Activated T-helper 1 cell treated with anti-CD3 and anti-CD28 coated beads, Interleukin-12 subunit alpha, Interleukin-12 subunit beta, Interleukin-2, Interleukin-4 antibody, amounts not matched to agents 30 ng/mL and 10 ng/mL and 1 ng/mL, durations not matched to agents 14 hours and 24 hours and 36 hours (primary cell): ENCODE measurements at regions of chr17 and their contacts with region 1.

Region 1: GRCh38 chr17:75319904-75320691 is 30.9 kb upstream of the SLC25A19 start:
- DNase-seq: no peak
- H3K4me3 Mint-ChIP-seq: no peak overlapping the region
- H3K27ac Mint-ChIP-seq: no peak overlapping the region
- H3K4me1 Mint-ChIP-seq: peaks cover 16% of the 10 kb centered on the region
- H3K27me3 Mint-ChIP-seq: no peaks in the 10 kb centered on the region

Region 2: GRCh38 chr17:75295201-75296158 is 24.6 kb before region 1 on chr17:
- intact Hi-C with region 1: loop called (anchors 1 kb)
- DNase-seq: peak; percentile 49
- H3K4me3 Mint-ChIP-seq: peak overlapping the region; percentile 49
- H3K27ac Mint-ChIP-seq: peak overlapping the region; percentile 96
- H3K4me1 Mint-ChIP-seq: peaks cover 24% of the 10 kb centered on the region
- H3K27me3 Mint-ChIP-seq: no peaks in the 10 kb centered on the region

Region 3: GRCh38 chr17:75338335-75338734 is 18.2 kb after region 1 on chr17:
- intact Hi-C with region 1: loop called (anchors 2 kb)
- DNase-seq: no peak
- H3K4me3 Mint-ChIP-seq: peak overlapping the region; percentile 63
- H3K27ac Mint-ChIP-seq: peak overlapping the region; percentile 90
- H3K4me1 Mint-ChIP-seq: peaks cover 74% of the 10 kb centered on the region
- H3K27me3 Mint-ChIP-seq: no peaks in the 10 kb centered on the region

Region 4: DNA sequence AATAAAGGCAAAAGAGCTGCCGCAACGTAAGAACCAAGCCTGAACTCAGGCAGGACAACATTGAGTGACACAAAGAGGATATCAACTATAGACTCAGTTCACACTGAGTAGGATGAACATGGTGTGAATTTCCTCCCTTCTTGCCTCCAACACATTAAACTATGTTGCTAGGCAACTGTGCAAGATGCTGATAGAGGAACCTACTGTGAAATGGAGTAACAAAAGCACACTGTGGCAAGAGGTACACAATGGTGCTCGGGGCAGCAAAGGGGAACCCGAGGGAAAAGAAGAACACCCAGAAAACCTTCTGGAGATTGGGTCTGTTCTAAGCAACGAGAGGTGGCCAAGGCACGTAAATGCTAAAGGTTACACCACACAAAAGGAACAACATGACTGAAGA is 51.2 kb after region 1 on chr17:
- intact Hi-C with region 1: loop called (anchors 2 kb)
- DNase-seq: no peak
- H3K4me3 Mint-ChIP-seq: peak overlapping the region; percentile 65
- H3K27ac Mint-ChIP-seq: peak overlapping the region; percentile 92
- H3K4me1 Mint-ChIP-seq: peaks cover 60% of the 10 kb centered on the region
- H3K27me3 Mint-ChIP-seq: no peaks in the 10 kb centered on the region

Region 5: DNA sequence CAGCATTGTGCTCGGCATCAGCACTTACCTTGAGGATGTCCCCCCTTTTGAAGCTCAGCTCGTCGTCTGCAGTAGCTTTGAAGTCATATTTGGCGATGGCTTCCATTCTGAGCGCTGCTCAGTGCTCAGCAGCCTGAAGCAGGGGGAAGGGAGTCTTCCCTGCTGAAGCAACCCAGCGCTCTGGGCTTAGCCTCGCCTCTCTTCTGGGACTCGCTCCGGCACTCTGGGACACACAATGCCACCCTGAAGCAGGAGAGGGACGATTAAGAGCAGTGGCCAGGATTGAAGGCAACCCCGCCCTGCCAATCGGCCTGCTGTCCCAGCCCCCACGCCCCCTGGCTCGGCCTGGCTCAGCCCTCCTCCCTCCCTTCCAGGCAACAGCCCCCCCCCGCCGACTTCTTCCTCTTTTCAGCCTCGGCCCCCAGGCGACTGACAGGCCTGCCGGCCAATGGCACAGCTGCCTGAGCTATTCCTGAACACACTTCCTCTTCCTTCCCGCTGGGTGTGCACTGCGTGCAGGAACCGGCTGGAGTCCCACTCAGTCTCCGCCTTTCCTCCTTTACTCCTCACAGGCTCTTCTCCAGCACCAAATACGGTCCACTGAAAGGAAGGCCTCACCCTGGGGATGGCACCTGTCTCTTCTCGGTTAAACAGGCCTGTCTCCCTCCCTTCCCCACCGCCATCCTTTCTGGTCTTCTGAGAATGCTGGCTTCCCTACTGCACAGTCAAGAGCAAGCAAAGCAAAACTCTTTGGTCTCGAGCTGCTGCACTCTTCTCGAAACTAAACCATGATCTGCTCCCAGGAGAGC is 73.6 kb after region 1 on chr17:
- intact Hi-C with region 1: loop called (anchors 1 kb)
- DNase-seq: peak; percentile 76
- H3K4me3 Mint-ChIP-seq: peak overlapping the region; percentile 86
- H3K27ac Mint-ChIP-seq: peak overlapping the region; percentile 78
- H3K4me1 Mint-ChIP-seq: peaks cover 76% of the 10 kb centered on the region
- H3K27me3 Mint-ChIP-seq: no peaks in the 10 kb centered on the region

Region 6: GRCh38 chr17:75412455-75413317 is 92.6 kb after region 1 on chr17:
- intact Hi-C with region 1: loop called (anchors 1 kb)
- DNase-seq: peak; percentile 69
- H3K4me3 Mint-ChIP-seq: no peak overlapping the region
- H3K27ac Mint-ChIP-seq: no peak overlapping the region
- H3K4me1 Mint-ChIP-seq: peaks cover 29% of the 10 kb centered on the region
- H3K27me3 Mint-ChIP-seq: peaks cover 10% of the 10 kb centered on the region